Gastrocnemius medialis (tissue), 4 donors: ENCODE measurements at regions of chr15 and their contacts with region 1.

Region 1: DNA sequence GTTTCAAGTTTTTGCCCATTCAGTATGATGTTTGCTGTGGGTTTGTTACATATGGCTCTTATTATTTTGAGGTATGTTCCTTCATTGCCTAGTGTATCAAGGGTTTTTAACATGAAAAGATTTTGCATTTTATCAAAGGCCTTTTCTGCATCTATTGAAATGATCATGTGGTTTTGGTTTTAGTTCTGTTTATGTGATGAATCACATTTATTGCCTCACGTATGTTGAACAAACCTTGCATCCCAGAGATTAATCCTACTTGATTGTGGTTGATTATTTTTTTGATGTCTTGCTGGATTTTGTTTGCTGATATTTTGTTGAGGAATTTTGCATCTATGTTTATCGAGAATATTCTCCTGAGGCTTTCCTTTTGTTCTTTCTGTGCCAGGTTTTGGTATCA is 39.4 kb downstream of the TMCO5A start:
- DNase-seq: no peak
- ATAC-seq: no peak
- H3K4me3 ChIP-seq: no peak overlapping the region
- H3K27ac ChIP-seq: no peak overlapping the region
- H3K4me1 ChIP-seq: no peaks in the 10 kb centered on the region
- H3K27me3 ChIP-seq: no peaks in the 10 kb centered on the region
- CTCF ChIP-seq: no peak
- POLR2A ChIP-seq: no peak

Region 2: GRCh38 chr15:37872661-37873060 is 101.2 kb before region 1 on chr15:
- in situ Hi-C with region 1: loop called in 1 of 4 experiments (anchors 25 kb)
- intact Hi-C with region 1: no loop called
- DNase-seq: no peak
- ATAC-seq: no peak
- H3K4me3 ChIP-seq: no peak overlapping the region
- H3K27ac ChIP-seq: no peak overlapping the region
- H3K4me1 ChIP-seq: no peaks in the 10 kb centered on the region
- H3K27me3 ChIP-seq: no peaks in the 10 kb centered on the region
- CTCF ChIP-seq: no peak
- POLR2A ChIP-seq: no peak

Region 3: GRCh38 chr15:37940876-37941275 is 33.0 kb before region 1 on chr15:
- in situ Hi-C with region 1: no loop called
- intact Hi-C with region 1: no loop called
- DNase-seq: no peak
- ATAC-seq: no peak
- H3K4me3 ChIP-seq: no peak overlapping the region
- H3K27ac ChIP-seq: no peak overlapping the region
- H3K4me1 ChIP-seq: no peaks in the 10 kb centered on the region
- H3K27me3 ChIP-seq: no peaks in the 10 kb centered on the region
- CTCF ChIP-seq: no peak
- POLR2A ChIP-seq: no peak